Thyroid gland (tissue), 4 donors: ENCODE measurements at regions of chr5 and their contacts with region 1.

Region 1: GRCh38 chr5:87780831-87781760 is 368.4 kb upstream of the CCNH start:
- DNase-seq: peak; percentile 70 to 82
- H3K4me3 ChIP-seq: no peak overlapping the region
- H3K27ac ChIP-seq: no peak overlapping the region
- H3K4me1 ChIP-seq: no peaks in the 10 kb centered on the region
- H3K27me3 ChIP-seq: peaks cover 5% of the 10 kb centered on the region
- CTCF ChIP-seq: peak; percentile 53 to 91 (median 84)
- POLR2A ChIP-seq: no peak

Region 2: GRCh38 chr5:87412630-87413342 is 368.3 kb before region 1 on chr5 and contains the start of gene CCNH:
- intact Hi-C with region 1: no loop called
- DNase-seq: peak; percentile 99
- H3K4me3 ChIP-seq: peak within 1 kb of the TSS; percentile 71 to 98 (median 80)
- H3K27ac ChIP-seq: peak within 1 kb of the TSS; percentile 93 to 99 (median 94)
- H3K4me1 ChIP-seq: peaks cover 6 to 10% of the 10 kb centered on the region in 2 donors
- H3K27me3 ChIP-seq: no peaks in the 10 kb centered on the region
- CTCF ChIP-seq: no peak
- POLR2A ChIP-seq: peak; percentile 72 to 96
- total RNA-seq, gene CCNH: 110 to 218 (median 146) TPM

Region 3: GRCh38 chr5:87452837-87453236 is 328.3 kb before region 1 on chr5:
- intact Hi-C with region 1: no loop called
- DNase-seq: no peak
- H3K4me3 ChIP-seq: no peak overlapping the region
- H3K27ac ChIP-seq: no peak overlapping the region
- H3K4me1 ChIP-seq: no peaks in the 10 kb centered on the region
- H3K27me3 ChIP-seq: no peaks in the 10 kb centered on the region
- CTCF ChIP-seq: no peak
- POLR2A ChIP-seq: no peak

Region 4: GRCh38 chr5:87844447-87844846 is 63.4 kb after region 1 on chr5:
- intact Hi-C with region 1: no loop called
- DNase-seq: no peak
- H3K4me3 ChIP-seq: no peak overlapping the region
- H3K27ac ChIP-seq: no peak overlapping the region
- H3K4me1 ChIP-seq: no peaks in the 10 kb centered on the region
- H3K27me3 ChIP-seq: no peaks in the 10 kb centered on the region
- CTCF ChIP-seq: no peak
- POLR2A ChIP-seq: no peak

Region 5: GRCh38 chr5:88690409-88691229 is 909.5 kb after region 1 on chr5:
- intact Hi-C with region 1: loop called (anchors 5 kb)
- DNase-seq: peak; percentile 59 to 67
- H3K4me3 ChIP-seq: peak overlapping the region in 1 of 3 donors; percentile 12
- H3K27ac ChIP-seq: no peak overlapping the region
- H3K4me1 ChIP-seq: peaks cover 4 to 30% of the 10 kb centered on the region in 2 donors
- H3K27me3 ChIP-seq: peaks cover 92% of the 10 kb centered on the region
- CTCF ChIP-seq: peak; percentile 78 to 98 (median 89)
- POLR2A ChIP-seq: no peak